Naive thymus-derived CD4-positive, alpha-beta T cell (primary cell): ENCODE measurements at regions of chr3 and their contacts with region 1.

Region 1: GRCh38 chr3:48548729-48549705 is 7.6 kb downstream of the PFKFB4 start:
- DNase-seq: peak; percentile 66 to 86 (median 78)
- ATAC-seq: peak; percentile 97
- H3K4me3 ChIP-seq: no peak overlapping the region
- H3K4me3 Mint-ChIP-seq: no peak overlapping the region
- H3K27ac ChIP-seq: no peak overlapping the region
- H3K27ac Mint-ChIP-seq: peak overlapping the region in 2 of 9 donors; percentile 9 to 48
- H3K4me1 ChIP-seq: no peaks in the 10 kb centered on the region
- H3K4me1 Mint-ChIP-seq: peaks cover 6 to 38% (median 20%) of the 10 kb centered on the region in 7 donors
- H3K27me3 ChIP-seq: no peaks in the 10 kb centered on the region
- H3K27me3 Mint-ChIP-seq: no peaks in the 10 kb centered on the region

Region 2: DNA sequence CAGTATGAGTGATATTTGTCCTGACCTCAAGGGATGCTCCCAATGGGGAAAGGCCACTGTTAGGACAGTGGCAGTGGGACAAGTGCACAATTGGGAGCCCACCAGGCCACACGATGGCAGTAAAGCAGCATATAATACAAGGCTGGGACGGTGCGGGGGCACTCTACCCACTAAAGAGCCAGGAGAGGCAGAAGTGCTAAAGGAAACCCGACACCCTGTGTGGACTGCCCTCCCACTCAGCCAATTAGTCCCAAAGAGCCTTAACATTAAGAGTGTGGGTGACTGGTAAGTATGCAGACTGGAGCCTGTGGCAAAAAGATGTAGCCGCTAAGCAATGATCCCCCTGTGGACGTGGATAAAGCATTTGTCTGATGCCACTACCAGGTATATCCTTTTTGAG is 316.3 kb before region 1 on chr3:
- CTCF ChIA-PET with region 1: no interaction called
- POLR2A ChIA-PET with region 1: no interaction called
- intact Hi-C with region 1: loop called in 1 of 2 experiments (anchors 1 kb)
- DNase-seq: peak; percentile 21 to 54 (median 44)
- ATAC-seq: peak; percentile 92
- H3K4me3 ChIP-seq: no peak overlapping the region
- H3K4me3 Mint-ChIP-seq: no peak overlapping the region
- H3K27ac ChIP-seq: no peak overlapping the region
- H3K27ac Mint-ChIP-seq: no peak overlapping the region
- H3K4me1 ChIP-seq: no peaks in the 10 kb centered on the region
- H3K4me1 Mint-ChIP-seq: peaks cover 0 to 6% (median 3%) of the 10 kb centered on the region in 7 donors
- H3K27me3 ChIP-seq: no peaks in the 10 kb centered on the region
- H3K27me3 Mint-ChIP-seq: peaks cover 0 to 6% (median 0%) of the 10 kb centered on the region in 5 donors

Region 3: DNA sequence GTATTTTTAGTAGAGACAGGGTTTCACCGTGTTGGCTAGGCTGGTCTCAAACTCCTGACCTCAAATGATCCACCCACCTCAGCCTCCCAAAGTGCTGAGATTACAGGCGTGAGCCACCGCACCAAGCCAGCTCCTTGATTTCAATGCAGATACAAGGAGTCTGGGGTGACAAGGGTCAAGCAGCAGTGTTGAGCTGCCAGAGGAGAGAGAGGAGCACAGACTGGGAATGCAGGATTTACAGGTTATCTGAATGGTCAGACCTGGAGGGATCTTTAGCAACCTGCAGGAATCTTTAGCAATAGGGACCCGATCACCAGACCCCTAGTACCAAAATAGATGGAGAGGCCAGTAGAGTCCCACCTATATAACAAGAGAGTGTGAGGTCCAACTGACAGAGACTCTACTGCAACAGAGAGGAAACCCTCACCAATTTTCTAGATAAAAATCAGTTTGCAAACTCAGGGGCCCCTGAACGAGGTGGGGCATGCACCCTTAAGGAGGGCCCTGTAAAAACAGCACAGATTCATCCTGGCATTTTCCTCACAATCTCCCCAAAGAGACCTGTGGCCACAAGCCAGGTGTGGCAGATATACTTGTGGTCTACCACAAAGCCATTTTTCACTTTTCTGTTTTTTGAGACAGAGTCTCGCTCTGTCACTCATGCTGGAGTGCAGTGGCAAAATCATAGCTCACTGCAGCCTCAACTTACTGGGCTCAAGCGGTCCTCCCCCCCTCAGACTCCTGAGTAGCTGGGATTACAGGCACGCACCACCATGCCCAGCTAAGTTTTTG is 34.4 kb before region 1 on chr3:
- CTCF ChIA-PET with region 1: interaction called, 25 read pairs
- POLR2A ChIA-PET with region 1: interaction called, 4 read pairs
- intact Hi-C with region 1: loop called in 1 of 2 experiments (anchors 2 kb)
- DNase-seq: peak in 6 of 9 donors; percentile 48 to 67 (median 54)
- ATAC-seq: peak; percentile 66
- H3K4me3 ChIP-seq: peak overlapping the region; percentile 25
- H3K4me3 Mint-ChIP-seq: peak overlapping the region; percentile 62 to 82 (median 72)
- H3K27ac ChIP-seq: no peak overlapping the region
- H3K27ac Mint-ChIP-seq: peak overlapping the region; percentile 55 to 91 (median 78)
- H3K4me1 ChIP-seq: peaks cover 35 to 61% of the 10 kb centered on the region in 2 donors
- H3K4me1 Mint-ChIP-seq: peaks cover 48 to 85% (median 75%) of the 10 kb centered on the region in 7 donors
- H3K27me3 ChIP-seq: no peaks in the 10 kb centered on the region
- H3K27me3 Mint-ChIP-seq: no peaks in the 10 kb centered on the region